ENCODE measurements at regions of chr20 and their contacts with region 1.

Region 1: DNA sequence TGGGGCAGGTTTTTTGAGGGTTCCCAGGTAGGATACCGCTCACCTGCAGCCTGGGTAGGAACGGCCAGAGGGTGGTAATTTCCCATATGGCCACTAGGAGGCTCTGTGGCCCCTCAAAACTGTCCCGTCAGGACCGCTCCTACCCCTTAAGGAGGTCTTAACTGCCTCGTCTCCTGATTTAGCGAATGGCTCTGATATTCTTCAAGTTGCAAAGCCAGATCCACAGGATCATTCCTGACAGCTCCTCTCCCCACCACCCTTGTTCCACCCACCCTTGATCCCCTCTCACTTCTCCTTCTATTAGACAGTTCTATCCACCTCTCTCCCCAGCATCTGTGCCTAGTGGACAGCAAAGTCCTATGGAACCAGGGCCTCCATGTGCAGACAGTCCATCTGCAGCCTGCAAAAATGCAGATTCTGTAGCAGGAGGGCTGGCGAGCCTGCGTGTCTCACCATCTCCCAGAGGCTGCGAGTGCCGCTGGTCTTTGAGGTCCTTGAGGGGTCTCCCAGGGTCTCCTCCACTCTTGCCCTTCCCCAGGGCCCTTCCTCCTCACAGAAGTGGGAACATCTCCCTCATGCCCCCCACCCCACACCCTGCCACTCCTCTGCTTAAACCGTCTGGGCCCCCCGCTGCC is 34.3 kb upstream of the ZBP1 start:
- DNase-seq: peak; percentile 67 to 87 (median 86)
- ATAC-seq: peak; percentile 91
- H3K4me3 ChIP-seq: no peak overlapping the region
- H3K27ac ChIP-seq: no peak overlapping the region
- H3K4me1 ChIP-seq: peaks cover 0 to 18% of the 10 kb centered on the region in 2 experiments; a peak in 1 of 5 replicates
- H3K27me3 ChIP-seq: peaks cover 35 to 82% of the 10 kb centered on the region in 2 experiments; a peak in 4 of 5 replicates
- CTCF ChIP-seq: peak; percentile 77 to 95 (median 86)
- EP300 ChIP-seq: no peak
- POLR2A ChIP-seq: no peak
- RAD21 ChIP-seq: peak; percentile 77 to 82

Region 2: DNA sequence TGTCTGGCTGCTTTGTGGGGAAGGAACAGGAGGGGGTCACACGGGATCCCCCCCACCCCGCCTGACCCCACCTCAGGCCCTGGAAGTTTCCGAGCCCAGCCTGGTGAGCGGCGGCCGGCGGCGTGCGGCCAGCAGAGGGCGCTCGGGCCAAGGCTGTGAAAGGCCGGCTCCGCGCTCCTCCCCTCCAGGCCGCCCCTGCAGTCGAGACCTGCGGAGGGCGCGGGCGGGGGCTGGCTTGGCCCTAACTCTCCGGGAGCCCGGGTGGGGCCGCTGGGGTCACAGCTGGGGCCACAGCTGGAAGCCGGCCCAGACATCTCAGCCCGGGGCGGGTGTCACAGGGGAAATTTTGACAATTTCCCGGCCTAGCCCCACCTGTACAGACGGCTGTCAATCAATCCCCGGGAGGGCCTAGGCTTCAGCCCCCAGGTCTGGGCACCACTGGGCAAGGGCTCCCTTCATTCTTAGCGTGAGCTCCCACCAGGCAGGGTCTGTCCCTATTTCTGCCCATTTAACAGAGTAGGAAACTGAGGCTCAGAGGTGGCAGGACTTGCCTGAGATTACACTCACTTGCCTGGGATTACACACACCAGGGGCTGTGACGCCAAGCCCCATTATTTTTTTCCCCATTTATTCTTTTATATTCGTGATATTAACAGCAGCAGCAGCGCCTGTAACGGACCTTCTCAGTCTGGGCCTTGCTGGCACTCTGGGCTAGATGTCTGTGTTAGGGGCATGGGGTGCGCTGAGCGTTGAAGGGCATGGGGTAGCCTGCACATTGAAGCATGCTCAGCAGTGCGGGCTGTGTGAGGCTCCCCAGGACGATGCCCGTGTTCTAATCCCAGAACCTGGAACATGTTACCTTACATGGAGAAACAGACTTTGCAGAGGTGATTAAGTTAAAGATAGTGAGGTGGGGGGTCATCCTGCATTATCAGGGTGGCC is 57.2 kb before region 1 on chr20:
- CTCF ChIA-PET with region 1: interaction called, 5 read pairs
- POLR2A ChIA-PET with region 1: no interaction called
- in situ Hi-C with region 1: no loop called
- intact Hi-C with region 1: loop called (anchors 2 kb)
- DNase-seq: peak; percentile 80 to 93 (median 89)
- ATAC-seq: peak; percentile 92
- H3K4me3 ChIP-seq: no peak overlapping the region; the same call in 1 of the 2 replicates
- H3K27ac ChIP-seq: no peak overlapping the region
- H3K4me1 ChIP-seq: peaks cover 15 to 32% of the 10 kb centered on the region in 2 experiments; a peak in 4 of 5 replicates
- H3K27me3 ChIP-seq: peaks cover 6 to 33% of the 10 kb centered on the region in 2 experiments; a peak in 2 of 5 replicates
- CTCF ChIP-seq: peak; percentile 82 to 95 (median 83)
- EP300 ChIP-seq: no peak
- POLR2A ChIP-seq: no peak
- RAD21 ChIP-seq: peak; percentile 87 to 89

Region 3: GRCh38 chr20:57849121-57849520 is 194.6 kb after region 1 on chr20:
- CTCF ChIA-PET with region 1: no interaction called
- POLR2A ChIA-PET with region 1: no interaction called
- in situ Hi-C with region 1: no loop called
- intact Hi-C with region 1: loop called (anchors 10 kb)
- DNase-seq: no peak
- ATAC-seq: no peak
- H3K4me3 ChIP-seq: no peak overlapping the region
- H3K27ac ChIP-seq: no peak overlapping the region
- H3K4me1 ChIP-seq: no peaks in the 10 kb centered on the region
- H3K27me3 ChIP-seq: no peaks in the 10 kb centered on the region; a peak in 1 of 5 replicates
- CTCF ChIP-seq: no peak
- EP300 ChIP-seq: no peak
- POLR2A ChIP-seq: no peak
- RAD21 ChIP-seq: no peak

Region 4: GRCh38 chr20:58087193-58087858 is 432.8 kb after region 1 on chr20:
- CTCF ChIA-PET with region 1: interaction called, 3 read pairs
- POLR2A ChIA-PET with region 1: no interaction called
- in situ Hi-C with region 1: no loop called
- intact Hi-C with region 1: loop called (anchors 1 kb)
- DNase-seq: peak; percentile 43 to 54 (median 44)
- ATAC-seq: peak; percentile 72
- H3K4me3 ChIP-seq: no peak overlapping the region
- H3K27ac ChIP-seq: no peak overlapping the region
- H3K4me1 ChIP-seq: no peaks in the 10 kb centered on the region
- H3K27me3 ChIP-seq: peaks cover under 1 to 25% of the 10 kb centered on the region in 2 experiments; a peak in 2 of 5 replicates
- CTCF ChIP-seq: peak; percentile 72 to 87 (median 78)
- EP300 ChIP-seq: no peak
- POLR2A ChIP-seq: no peak
- RAD21 ChIP-seq: peak; percentile 34 to 72

Region 5: DNA sequence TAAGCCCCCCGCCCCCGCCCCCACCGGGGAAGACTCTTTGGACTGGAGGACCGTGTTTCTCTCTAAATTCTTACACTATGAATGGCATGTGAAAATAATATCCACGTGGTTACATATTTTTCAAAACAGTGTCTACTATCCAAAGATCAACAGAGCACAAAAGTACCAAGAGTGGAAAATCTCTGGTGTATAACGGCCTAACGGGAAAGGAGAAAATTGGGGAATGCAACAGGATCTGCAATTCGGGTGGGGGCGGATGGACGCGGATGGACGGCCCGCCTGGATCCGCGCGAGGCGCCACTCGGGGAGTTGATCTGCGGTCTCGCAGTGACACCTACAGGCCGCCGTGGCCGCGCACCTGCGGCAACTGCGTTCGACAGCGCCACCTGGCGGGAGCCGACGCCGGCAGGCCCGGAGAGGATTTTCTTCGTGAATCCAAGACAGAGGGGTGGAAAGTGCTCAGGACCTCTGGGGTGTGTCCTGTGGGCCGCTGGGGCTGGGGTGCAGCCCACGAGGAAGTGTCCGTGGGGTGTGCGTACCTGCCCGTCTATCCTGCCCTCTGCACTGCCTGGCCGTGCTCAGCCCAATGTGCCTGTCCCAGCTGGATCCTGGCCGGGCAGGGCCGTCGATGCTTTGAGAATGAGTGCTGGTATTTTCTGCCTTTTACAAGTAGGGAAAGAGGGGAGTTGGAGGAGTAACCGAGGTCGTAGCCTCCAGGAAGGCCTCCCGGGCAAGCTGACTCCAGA is 555.3 kb after region 1 on chr20:
- CTCF ChIA-PET with region 1: interaction called, 32 read pairs
- POLR2A ChIA-PET with region 1: interaction called, 3 read pairs
- in situ Hi-C with region 1: no loop called
- intact Hi-C with region 1: no loop called
- DNase-seq: peak; percentile 86 to 94 (median 92)
- ATAC-seq: peak; percentile 96
- H3K4me3 ChIP-seq: no peak overlapping the region
- H3K27ac ChIP-seq: no peak overlapping the region
- H3K4me1 ChIP-seq: peaks cover 0 to 6% of the 10 kb centered on the region in 2 experiments; a peak in 1 of 5 replicates
- H3K27me3 ChIP-seq: peaks cover 26 to 63% of the 10 kb centered on the region in 2 experiments
- CTCF ChIP-seq: peak; percentile 100
- EP300 ChIP-seq: peak; percentile 29; the same call in 1 of the 2 replicates
- POLR2A ChIP-seq: no peak
- RAD21 ChIP-seq: peak; percentile 96 to 99